ENCODE measurements at regions of chr19 and their contacts with region 1.

Region 1: GRCh38 chr19:34999498-35000341 is at the start of gene GRAMD1A:
- DNase-seq: peak; percentile 70
- H3K4me3 Mint-ChIP-seq: peak within 1 kb of the TSS; percentile 99
- H3K27ac Mint-ChIP-seq: peak within 1 kb of the TSS; percentile 98
- H3K4me1 Mint-ChIP-seq: peaks cover 47% of the 10 kb centered on the region
- H3K27me3 Mint-ChIP-seq: no peaks in the 10 kb centered on the region
- total RNA-seq, gene GRAMD1A: 260 TPM in 2 replicates

Region 2: DNA sequence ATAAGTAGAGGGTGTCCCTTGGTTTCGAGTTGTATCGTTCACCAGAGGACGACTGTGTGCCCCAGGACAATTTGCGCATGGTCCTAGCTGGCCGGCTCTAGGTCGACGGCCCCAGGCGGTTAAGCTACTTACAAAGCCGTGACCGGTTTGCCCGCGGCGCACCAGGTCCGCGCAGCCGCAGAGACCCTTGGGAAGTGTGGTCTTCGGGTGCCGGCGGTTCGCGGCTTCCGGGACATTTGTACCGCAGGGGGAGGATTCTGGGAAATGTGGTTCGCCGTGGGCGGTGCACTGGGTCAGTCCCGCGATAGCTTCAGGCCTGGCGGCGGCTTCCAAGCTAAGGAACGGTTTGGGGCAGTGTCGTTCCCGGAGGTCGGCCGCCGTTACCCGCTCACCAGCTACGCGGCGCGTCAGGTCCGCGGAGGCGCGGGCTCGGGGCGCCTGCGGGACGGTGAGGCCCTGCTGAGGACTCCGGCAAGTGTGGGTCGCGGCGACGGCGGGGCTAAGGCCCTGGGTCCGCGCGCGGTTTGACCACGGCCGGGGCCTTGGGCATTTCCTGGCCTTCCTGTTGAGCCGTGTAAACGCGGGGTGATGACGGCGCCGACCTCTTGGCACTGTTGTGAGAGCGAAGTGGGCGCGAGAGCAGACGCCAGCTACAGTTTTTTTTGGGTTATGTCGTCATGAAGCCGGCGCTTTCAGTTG is 322.2 kb before region 1 on chr19 and contains the start of gene ZNF302:
- intact Hi-C with region 1: loop called (anchors 5 kb)
- DNase-seq: peak; percentile 94
- H3K4me3 Mint-ChIP-seq: peak within 1 kb of the TSS; percentile 93
- H3K27ac Mint-ChIP-seq: peak within 1 kb of the TSS; percentile 99
- H3K4me1 Mint-ChIP-seq: peaks cover 23% of the 10 kb centered on the region
- H3K27me3 Mint-ChIP-seq: peaks cover 6% of the 10 kb centered on the region
- total RNA-seq, gene ZNF302: 14.1 and 14.7 TPM in 2 replicates

Region 3: GRCh38 chr19:34853369-34853768 is 146.4 kb before region 1 on chr19:
- intact Hi-C with region 1: no loop called
- DNase-seq: no peak
- H3K4me3 Mint-ChIP-seq: no peak overlapping the region
- H3K27ac Mint-ChIP-seq: no peak overlapping the region
- H3K4me1 Mint-ChIP-seq: peaks cover under 1% of the 10 kb centered on the region
- H3K27me3 Mint-ChIP-seq: no peaks in the 10 kb centered on the region

Region 4: GRCh38 chr19:34926685-34927375 is 72.9 kb before region 1 on chr19 and contains the start of gene ZNF30:
- intact Hi-C with region 1: no loop called
- DNase-seq: peak; percentile 65
- H3K4me3 Mint-ChIP-seq: peak within 1 kb of the TSS; percentile 87
- H3K27ac Mint-ChIP-seq: no peak within 1 kb of the TSS
- H3K4me1 Mint-ChIP-seq: peaks cover 10% of the 10 kb centered on the region
- H3K27me3 Mint-ChIP-seq: no peaks in the 10 kb centered on the region
- total RNA-seq, gene ZNF30: 3.3 and 3.5 TPM in 2 replicates

Region 5: GRCh38 chr19:34963573-34964409 is 35.9 kb before region 1 on chr19 and contains the start of gene ZNF792:
- intact Hi-C with region 1: loop called (anchors 5 kb)
- DNase-seq: peak; percentile 35
- H3K4me3 Mint-ChIP-seq: peak within 1 kb of the TSS; percentile 96
- H3K27ac Mint-ChIP-seq: peak within 1 kb of the TSS; percentile 77
- H3K4me1 Mint-ChIP-seq: peaks cover 16% of the 10 kb centered on the region
- H3K27me3 Mint-ChIP-seq: no peaks in the 10 kb centered on the region
- total RNA-seq, gene ZNF792: 9.9 and 10.0 TPM in 2 replicates

Region 6: GRCh38 chr19:35262101-35262761 is 262.5 kb after region 1 on chr19:
- intact Hi-C with region 1: no loop called
- DNase-seq: no peak
- H3K4me3 Mint-ChIP-seq: no peak overlapping the region
- H3K27ac Mint-ChIP-seq: no peak overlapping the region
- H3K4me1 Mint-ChIP-seq: peaks cover 12% of the 10 kb centered on the region
- H3K27me3 Mint-ChIP-seq: no peaks in the 10 kb centered on the region